IMR-90 (cell line): ENCODE measurements at regions of chr7 and their contacts with region 1.

Region 1: DNA sequence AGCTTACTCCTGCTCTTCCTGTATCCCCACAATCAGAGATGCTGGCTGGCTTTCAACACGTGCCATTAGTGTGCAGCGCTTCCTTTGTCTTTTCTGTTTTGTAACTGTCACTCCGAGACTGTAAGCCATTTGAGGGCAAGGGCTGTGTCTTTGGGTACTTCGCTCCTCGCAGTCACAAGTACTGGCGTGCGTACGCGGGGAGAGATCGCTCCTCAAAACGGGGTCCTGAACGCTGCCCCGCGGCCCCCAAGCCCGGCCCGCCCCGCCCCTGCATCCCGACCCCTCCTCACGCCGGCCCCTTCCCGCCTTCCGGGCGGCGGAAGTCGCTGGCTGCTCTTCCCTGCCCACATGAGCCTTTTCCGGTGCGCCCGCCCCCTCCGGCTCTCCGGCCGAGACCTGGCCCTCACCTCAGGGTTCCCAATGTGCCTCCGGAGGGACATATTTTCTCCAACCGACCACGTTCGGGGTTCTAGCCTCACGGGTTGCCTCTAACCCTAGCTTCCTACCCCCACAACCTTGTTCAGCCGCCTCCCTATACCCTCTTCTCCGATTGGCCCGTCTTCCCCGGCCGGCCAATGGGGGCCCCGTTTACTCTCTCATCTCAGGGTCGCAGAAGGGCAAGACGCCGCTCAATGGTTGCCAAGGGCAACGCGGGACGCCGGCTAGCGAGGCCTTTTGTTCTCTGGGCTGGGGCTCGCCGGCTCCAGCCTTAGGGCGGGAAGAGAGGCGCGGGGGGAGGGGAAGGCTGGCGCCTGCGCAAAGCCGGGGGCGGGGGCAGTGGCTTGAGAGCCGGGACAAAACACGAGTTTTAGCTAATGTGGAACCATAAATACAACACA is at the start of gene CEP41:
- DNase-seq: peak; percentile 96
- ATAC-seq: peak; percentile 99
- H3K4me3 ChIP-seq: peak within 1 kb of the TSS; percentile 72
- H3K27ac ChIP-seq: peak within 1 kb of the TSS; percentile 99
- H3K4me1 ChIP-seq: peaks cover 6% of the 10 kb centered on the region
- H3K27me3 ChIP-seq: no peaks in the 10 kb centered on the region
- CTCF ChIP-seq: no peak
- POLR2A ChIP-seq: no peak
- RAD21 ChIP-seq: no peak
- total RNA-seq, gene CEP41: 11.1 and 12.2 TPM in 2 replicates

Region 2: GRCh38 chr7:130277763-130278643 is 162.7 kb before region 1 on chr7:
- CTCF ChIA-PET with region 1: no interaction called
- POLR2A ChIA-PET with region 1: no interaction called
- dilution Hi-C with region 1: no loop called
- in situ Hi-C with region 1: no loop called
- intact Hi-C with region 1: loop called (anchors 5 kb)
- DNase-seq: peak; percentile 69
- ATAC-seq: peak; percentile 50
- H3K4me3 ChIP-seq: no peak overlapping the region
- H3K27ac ChIP-seq: no peak overlapping the region
- H3K4me1 ChIP-seq: peaks cover 11% of the 10 kb centered on the region
- H3K27me3 ChIP-seq: no peaks in the 10 kb centered on the region
- CTCF ChIP-seq: peak; percentile 57
- POLR2A ChIP-seq: no peak
- RAD21 ChIP-seq: peak; percentile 55